GM10248 (cell line): ENCODE measurements at regions of chr7 and their contacts with region 1.

Region 1: DNA sequence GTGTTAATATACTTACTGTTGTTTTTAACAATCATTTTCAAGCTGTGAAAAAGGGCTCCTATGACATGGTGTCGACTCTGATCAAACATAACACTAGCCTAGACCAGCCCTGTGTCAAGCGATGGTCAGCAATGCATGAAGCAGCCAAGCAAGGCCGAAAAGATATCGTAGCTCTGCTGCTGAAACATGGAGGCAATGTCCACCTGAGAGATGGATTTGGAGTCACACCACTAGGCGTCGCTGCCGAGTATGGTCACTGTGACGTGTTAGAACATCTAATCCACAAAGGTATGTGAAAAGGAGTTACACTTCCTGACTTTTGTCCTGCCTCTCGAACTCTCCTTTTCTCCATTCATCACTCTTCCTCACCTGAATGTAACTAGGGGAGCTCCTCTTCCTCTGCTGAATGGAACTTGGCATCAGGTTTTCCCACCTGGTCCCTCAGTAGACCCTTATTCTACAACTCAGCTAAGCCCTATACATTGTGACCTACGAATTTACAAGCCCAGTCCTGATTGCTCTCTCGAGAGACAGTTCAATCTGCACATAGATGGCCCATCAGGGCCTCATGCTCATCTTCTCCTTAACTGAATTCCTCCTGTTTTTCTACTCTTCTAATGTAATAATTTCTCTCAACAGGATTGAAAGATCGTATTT is 23.0 kb downstream of the ASB15 start:
- DNase-seq: peak; percentile 63
- CTCF ChIP-seq: peak; percentile 81

Region 2: GRCh38 chr7:123635551-123636359 is 11.1 kb after region 1 on chr7:
- CTCF ChIA-PET with region 1: interaction called, 25 read pairs
- POLR2A ChIA-PET with region 1: no interaction called
- DNase-seq: no peak
- CTCF ChIP-seq: peak; percentile 36

Region 3: GRCh38 chr7:123643495-123644441 is 19.1 kb after region 1 on chr7:
- CTCF ChIA-PET with region 1: interaction called, 15 read pairs
- POLR2A ChIA-PET with region 1: no interaction called
- DNase-seq: no peak
- CTCF ChIP-seq: no peak

Region 4: DNA sequence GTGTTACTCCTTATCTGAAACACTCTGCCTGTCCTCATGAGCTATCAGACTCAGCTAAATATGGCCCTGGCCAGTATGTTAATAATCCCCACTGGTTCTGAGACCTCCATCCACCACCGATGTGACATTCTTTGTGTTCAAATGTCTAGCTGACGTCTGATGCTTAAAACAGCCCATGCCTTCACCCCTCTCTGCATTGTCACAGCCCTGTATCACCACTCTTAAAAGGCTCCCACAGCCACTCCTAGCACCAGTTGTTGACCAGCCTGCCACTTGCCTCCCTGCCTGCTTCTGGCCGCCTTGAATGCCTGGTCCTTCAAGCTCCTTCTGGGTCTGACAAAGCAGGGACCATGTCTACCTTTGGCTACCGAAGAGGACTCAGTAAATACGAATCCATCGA is 31.0 kb after region 1 on chr7 and contains the start of gene LMOD2:
- CTCF ChIA-PET with region 1: no interaction called
- POLR2A ChIA-PET with region 1: no interaction called
- DNase-seq: no peak
- CTCF ChIP-seq: no peak